ENCODE measurements at regions of chr6 and their contacts with region 1.

Region 1: DNA sequence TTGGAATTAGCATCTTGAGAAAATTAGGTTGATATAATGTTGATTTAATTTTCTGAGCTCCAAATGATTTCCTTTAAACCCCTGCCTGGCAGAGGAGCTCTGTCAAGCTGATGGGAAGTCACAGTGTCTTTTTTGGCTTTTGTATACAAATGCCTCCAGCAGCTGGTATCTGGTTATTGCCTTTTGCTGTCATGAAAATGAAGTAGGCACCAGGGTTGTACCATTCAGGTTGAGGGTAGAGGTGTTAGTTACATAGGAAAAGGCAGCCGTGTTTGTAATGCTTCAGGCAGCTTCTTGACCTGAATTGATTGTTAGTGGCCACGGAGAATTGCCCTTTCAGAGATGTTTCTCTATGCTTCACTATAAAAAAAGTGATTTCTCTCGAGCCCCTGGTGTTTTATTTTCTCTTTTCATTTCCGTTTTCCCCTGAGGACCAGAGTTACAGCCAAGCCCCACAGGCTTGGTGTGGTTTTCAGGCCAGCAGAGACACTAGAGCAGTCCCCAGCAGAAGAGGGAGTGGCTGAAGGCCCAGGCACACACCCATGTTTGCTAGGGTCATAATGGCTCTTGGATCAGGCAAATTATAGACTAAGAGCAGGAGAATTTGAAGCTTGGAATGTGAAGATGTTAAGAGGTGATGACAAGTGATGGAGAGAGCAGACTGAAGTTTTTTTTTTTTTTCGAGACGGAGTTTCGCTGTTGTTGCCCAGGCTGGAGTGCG is 21.6 kb downstream of the CMTR1 start:
- DNase-seq: no peak
- H3K4me3 Mint-ChIP-seq: no peak overlapping the region
- H3K27ac Mint-ChIP-seq: no peak overlapping the region
- H3K4me1 Mint-ChIP-seq: peaks cover 22% of the 10 kb centered on the region
- H3K27me3 Mint-ChIP-seq: no peaks in the 10 kb centered on the region

Region 2: DNA sequence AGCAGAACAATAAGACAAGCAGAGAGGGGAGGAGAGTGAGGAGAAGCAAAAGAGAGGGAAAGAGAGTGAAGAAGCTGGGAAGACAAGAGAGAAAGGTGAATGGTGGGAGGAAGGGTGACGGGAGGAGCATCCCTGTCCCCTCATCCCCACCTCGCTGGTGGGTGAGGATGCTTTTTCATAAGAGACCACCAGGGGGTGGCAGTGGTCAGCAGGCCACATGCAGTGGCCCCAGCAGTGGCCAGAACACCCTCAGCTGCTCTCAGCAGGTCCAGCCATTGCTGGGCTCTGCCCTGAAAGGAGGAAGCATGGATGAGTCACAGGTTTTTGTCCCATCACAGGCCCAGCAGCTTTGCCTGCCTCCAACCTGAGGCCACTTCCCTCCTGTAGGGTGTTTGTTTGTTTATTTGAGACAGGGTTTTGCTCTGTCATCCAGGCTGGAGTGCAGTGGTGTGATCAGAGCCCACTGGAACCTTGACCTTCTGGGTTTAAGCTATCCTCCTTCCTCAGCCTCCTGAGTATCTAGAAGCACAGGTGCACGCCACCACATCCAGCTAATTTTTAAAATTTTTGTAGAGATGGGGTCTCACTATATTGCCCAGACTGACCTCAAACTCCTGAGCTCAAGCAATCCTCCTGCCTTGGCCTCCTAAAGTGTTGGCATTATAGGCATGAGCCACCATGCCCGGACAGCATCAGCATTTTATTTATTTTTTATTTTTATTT is 425.2 kb before region 1 on chr6:
- intact Hi-C with region 1: loop called (anchors 5 kb)
- DNase-seq: peak; percentile 84
- H3K4me3 Mint-ChIP-seq: peak overlapping the region; percentile 39
- H3K27ac Mint-ChIP-seq: peak overlapping the region; percentile 70
- H3K4me1 Mint-ChIP-seq: peaks cover 58% of the 10 kb centered on the region
- H3K27me3 Mint-ChIP-seq: no peaks in the 10 kb centered on the region

Measured in activated CD4-positive, alpha-beta T cell treated with anti-CD3 and anti-CD28 coated beads, Interleukin-2, amount 10 ng/mL, durations not matched to agents 24 days and 14 days (primary cell).